Right ventricle myocardium inferior (tissue), 1 donor: ENCODE measurements at regions of chr3 and their contacts with region 1.

Region 1: DNA sequence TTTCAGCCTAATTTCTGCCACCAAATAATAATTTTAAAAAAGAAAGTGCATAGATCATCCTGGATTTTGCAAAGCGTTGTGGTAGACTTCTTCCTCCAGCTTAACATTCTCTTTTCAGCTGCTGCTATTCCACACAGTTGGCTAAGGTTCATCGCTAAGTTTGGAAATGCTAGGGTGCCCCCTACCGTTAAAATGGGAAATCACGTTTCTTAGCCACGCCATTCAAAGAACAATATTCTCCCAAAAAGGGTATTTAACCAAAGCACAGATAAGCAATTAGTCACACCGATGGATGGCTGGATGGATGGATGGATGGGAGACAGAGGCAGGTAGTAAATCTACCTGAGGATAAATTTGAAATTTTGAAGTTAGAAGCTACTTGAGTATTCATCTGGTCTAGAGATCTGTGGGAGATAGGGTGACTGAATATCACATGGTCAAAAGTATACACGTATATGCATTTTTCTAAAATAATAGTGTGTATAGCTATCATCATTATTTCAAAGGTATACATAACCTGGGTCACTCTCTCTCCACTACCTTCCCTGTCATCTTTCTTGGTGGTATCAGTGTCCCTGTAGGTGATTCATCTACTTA is 67.2 kb downstream of the EFHB start:
- DNase-seq: no peak
- ATAC-seq: no peak

Region 2: DNA sequence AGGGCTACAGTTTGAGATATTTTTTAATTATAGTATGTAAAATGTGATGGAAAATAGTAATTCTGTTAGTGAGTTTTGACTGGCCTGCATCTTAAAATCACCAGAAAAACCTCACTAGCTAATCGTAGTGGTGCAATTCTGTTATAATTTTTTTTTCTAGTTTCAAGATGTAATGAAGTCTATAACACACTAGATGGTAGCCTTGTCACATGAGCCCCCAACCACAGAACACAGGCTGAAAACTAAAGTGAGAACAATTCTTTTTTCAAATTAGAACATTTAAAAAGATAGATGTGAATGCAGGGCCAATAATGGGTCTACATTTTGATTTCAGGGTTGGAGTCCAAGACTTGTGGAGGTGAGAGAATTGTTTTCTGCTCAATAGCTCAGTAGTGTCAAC is 801.8 kb before region 1 on chr3:
- intact Hi-C with region 1: loop called (anchors 10 kb)
- DNase-seq: no peak
- ATAC-seq: no peak